Aorta (tissue), 5 donors: ENCODE measurements at regions of chr20 and their contacts with region 1.

Region 1: DNA sequence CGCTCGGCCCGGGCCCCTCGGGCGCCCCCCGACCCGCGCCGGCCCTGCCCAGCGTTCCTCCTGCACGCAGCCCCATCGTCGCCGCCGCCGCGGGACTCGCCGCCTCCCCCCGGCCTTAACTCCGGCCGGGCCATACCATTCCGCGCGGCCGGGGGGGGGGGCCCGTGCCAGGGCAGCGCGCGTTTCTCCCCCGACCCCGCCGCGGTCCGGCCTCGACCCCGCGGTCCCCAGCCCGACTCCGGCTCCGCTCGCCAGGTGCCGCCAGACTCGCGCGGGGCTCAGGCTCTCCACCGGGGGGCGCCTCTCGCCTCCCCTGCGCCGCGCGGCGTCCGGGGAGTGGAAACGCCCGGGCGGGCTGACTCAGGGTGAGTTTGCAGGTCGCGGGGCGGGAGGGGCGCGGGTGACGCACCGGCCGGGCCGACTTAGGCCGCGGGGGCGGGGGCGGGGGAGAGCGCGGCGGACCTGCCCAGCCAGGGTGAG is at the start of gene SRXN1:
- DNase-seq: peak; percentile 94 to 97
- ATAC-seq: peak; percentile 96
- H3K4me3 ChIP-seq: peak within 1 kb of the TSS; percentile 22 to 67
- H3K27ac ChIP-seq: peak within 1 kb of the TSS; percentile 6 to 65
- H3K4me1 ChIP-seq: no peaks in the 10 kb centered on the region
- H3K27me3 ChIP-seq: no peaks in the 10 kb centered on the region
- total RNA-seq, gene SRXN1: 17.7 to 18.5 TPM

Region 2: DNA sequence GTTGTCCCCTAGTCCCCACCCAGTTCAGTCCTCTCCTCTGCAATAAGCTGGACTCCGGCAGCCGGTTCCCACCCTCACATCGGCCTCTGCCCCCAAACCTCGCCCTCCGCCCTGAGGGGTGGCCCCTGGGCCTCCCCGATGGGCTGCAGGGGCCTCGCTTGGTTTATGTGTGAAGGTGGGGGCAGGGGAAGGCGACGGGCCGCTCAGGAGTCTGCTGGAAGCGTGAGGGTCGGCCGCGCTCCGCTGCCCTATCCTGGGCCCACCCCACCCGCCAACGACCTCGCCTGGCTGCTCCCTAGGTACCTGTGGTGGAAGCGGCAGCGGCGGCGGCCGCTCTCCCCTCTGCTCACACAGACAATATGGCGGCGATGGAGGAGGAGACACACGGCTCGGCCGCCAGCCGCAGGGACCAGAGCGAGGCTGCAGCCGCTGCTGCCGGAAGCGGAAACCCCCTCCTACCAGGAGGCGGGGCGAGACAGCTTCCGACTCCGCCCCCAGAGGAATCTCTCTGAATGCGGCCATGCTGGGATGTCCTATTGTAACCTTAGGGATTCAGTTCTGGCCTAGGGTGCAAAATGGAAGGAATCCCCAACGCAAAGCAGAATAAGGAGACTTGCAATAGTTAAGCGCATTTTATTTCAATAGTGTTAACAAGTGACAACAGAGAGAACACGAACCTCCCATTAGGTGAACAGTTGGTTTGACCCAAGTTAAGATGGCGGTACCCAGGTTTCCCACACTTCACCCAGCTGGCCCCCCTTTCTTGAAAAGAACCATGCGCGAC is 109.6 kb before region 1 on chr20 and contains the start of gene CSNK2A1:
- intact Hi-C with region 1: loop called (anchors 5 to 10 kb)
- DNase-seq: peak; percentile 96 to 97
- ATAC-seq: peak; percentile 99
- H3K4me3 ChIP-seq: peak within 1 kb of the TSS; percentile 90 to 99
- H3K27ac ChIP-seq: peak within 1 kb of the TSS in 1 of 2 donors; percentile 91
- H3K4me1 ChIP-seq: peaks cover 0 to 8% of the 10 kb centered on the region in 2 donors
- H3K27me3 ChIP-seq: no peaks in the 10 kb centered on the region
- total RNA-seq, gene CSNK2A1: 73.5 to 98.2 TPM

Region 3: DNA sequence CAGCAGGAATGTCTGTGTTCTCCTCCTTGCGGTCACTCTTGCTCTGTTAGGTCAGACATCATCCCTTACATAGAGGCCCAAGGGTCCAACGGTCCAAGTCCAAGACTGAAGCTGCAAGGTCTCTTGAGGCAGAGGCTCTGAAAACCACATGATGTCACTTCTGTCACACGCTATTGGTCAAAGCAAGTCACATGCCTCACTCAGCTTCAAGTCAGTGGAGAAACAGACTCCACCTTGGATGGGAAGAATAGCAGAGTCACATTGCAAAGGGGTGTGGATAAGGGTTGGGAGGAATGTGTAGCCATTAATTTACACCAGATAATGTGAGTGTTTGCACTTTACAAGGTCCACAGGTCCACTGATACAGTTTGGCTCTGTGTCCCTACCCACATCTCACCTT is 97.7 kb after region 1 on chr20:
- intact Hi-C with region 1: no loop called
- DNase-seq: peak in 1 of 2 donors; percentile 9
- ATAC-seq: no peak
- H3K4me3 ChIP-seq: no peak overlapping the region
- H3K27ac ChIP-seq: no peak overlapping the region
- H3K4me1 ChIP-seq: no peaks in the 10 kb centered on the region
- H3K27me3 ChIP-seq: no peaks in the 10 kb centered on the region

Region 4: DNA sequence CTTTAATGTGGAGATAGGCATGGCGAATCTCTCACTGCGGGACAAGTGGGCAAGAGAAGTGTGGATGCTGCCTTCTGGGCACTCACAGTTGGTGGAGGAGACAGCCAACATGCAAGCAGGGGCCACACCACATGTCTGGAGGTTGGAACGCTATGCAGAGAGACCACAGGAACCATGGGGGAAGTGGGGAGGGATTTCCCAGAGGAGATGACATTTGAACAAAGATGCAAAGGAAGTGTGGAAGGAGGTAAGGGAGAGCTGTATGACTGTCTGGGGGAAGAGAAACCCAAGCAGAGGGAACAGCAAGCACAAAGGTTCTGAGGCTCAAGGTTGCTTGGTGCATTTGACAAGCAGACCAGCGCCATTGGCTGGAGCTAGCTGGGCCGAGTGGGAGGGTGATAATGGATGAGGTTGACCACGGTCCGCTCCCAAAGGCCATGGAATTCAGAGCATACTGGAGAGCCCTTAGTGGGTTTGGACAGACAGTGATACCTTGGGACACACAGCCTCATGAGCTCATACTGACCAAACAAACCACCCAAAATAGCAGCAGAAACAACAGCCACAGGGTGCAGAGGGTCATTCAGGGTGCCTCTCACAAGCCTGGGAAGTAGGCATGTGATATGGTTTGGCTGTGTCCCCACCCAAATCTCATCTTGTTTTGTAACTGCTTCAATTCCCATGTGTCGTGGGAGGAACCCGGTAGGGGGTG is 172.7 kb after region 1 on chr20:
- intact Hi-C with region 1: loop called in 1 of 2 experiments (anchors 10 kb)
- DNase-seq: no peak
- ATAC-seq: peak; percentile 35
- H3K4me3 ChIP-seq: no peak overlapping the region
- H3K27ac ChIP-seq: no peak overlapping the region
- H3K4me1 ChIP-seq: no peaks in the 10 kb centered on the region
- H3K27me3 ChIP-seq: no peaks in the 10 kb centered on the region